Panc1 (cell line): ENCODE measurements at regions of chr21 and their contacts with region 1.

Region 1: DNA sequence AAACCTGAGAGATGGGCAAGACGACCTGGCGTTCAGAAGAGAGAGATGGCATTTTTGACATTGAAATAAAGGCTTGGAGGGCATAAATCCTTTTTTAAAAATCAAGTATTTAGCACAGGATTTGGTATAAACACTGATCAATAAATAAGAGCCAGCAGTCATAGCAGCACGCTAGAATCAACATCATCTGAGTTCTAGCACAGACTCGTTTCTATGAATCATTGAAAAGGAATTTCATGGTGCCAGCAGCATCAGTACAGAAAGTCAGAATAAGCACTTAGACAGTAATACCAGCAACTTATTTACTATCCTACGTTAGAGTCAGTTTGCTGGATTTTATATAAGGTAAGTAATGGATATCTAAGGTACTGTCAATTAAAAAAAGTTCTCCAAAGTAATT is 119.3 kb downstream of the HLCS start:
- DNase-seq: no peak
- ATAC-seq: peak; percentile 86
- H3K4me3 ChIP-seq: no peak overlapping the region
- H3K27ac ChIP-seq: peak overlapping the region; percentile 54
- H3K4me1 ChIP-seq: peaks cover 21% of the 10 kb centered on the region
- H3K27me3 ChIP-seq: no peaks in the 10 kb centered on the region
- CTCF ChIP-seq: no peak

Region 2: GRCh38 chr21:36749935-36750578 is 97.1 kb before region 1 on chr21:
- CTCF ChIA-PET with region 1: interaction called, 6 read pairs
- POLR2A ChIA-PET with region 1: no interaction called
- in situ Hi-C with region 1: no loop called
- intact Hi-C with region 1: loop called (anchors 10 kb)
- DNase-seq: no peak
- ATAC-seq: no peak
- H3K4me3 ChIP-seq: no peak overlapping the region
- H3K27ac ChIP-seq: no peak overlapping the region
- H3K4me1 ChIP-seq: 0 out of 2 replicates have a peak, but pooled peaks cover 3% of the 10 kb centered on the region
- H3K27me3 ChIP-seq: no peaks in the 10 kb centered on the region
- CTCF ChIP-seq: no peak